IMR-90 (cell line): ENCODE measurements at regions of chr2 and their contacts with region 1.

Region 1: GRCh38 chr2:135773917-135774316 is 32.3 kb downstream of the UBXN4 start:
- DNase-seq: peak; percentile 80
- ATAC-seq: peak; percentile 66
- H3K4me3 ChIP-seq: no peak overlapping the region
- H3K27ac ChIP-seq: no peak overlapping the region
- H3K4me1 ChIP-seq: no peaks in the 10 kb centered on the region; the same call in 1 of the 2 replicates
- H3K27me3 ChIP-seq: no peaks in the 10 kb centered on the region
- CTCF ChIP-seq: no peak
- POLR2A ChIP-seq: no peak
- RAD21 ChIP-seq: no peak

Region 2: DNA sequence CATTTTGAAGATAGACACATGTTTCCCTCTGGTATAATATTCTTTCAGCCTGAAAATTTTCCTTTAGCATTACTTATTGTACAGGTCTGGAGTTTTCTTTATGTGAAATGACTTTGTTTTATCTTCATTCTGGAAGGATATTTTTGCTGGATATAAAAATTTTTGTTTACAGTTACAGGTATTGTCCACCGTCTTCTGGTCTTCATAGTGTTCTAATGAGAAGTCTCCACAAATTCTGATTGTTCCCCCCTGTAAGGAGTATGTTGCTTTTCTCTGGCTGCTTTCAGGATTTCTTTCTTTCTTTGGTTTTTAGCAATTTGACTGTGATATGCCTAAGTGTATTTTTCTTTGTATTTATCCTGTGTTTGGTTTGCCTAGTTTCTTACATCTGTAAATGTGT is 17.2 kb before region 1 on chr2:
- CTCF ChIA-PET with region 1: interaction called, 3 read pairs
- POLR2A ChIA-PET with region 1: interaction called, 3 read pairs
- dilution Hi-C with region 1: no loop called
- in situ Hi-C with region 1: no loop called
- intact Hi-C with region 1: loop called (anchors 1 kb)
- DNase-seq: no peak
- ATAC-seq: no peak
- H3K4me3 ChIP-seq: no peak overlapping the region
- H3K27ac ChIP-seq: no peak overlapping the region
- H3K4me1 ChIP-seq: no peaks in the 10 kb centered on the region
- H3K27me3 ChIP-seq: no peaks in the 10 kb centered on the region
- CTCF ChIP-seq: no peak
- POLR2A ChIP-seq: no peak
- RAD21 ChIP-seq: no peak

Region 3: GRCh38 chr2:135762022-135762421 is 11.9 kb before region 1 on chr2:
- CTCF ChIA-PET with region 1: interaction called, 3 read pairs
- POLR2A ChIA-PET with region 1: interaction called, 3 read pairs
- dilution Hi-C with region 1: no loop called
- in situ Hi-C with region 1: no loop called
- intact Hi-C with region 1: loop called (anchors 1 kb)
- DNase-seq: no peak
- ATAC-seq: no peak
- H3K4me3 ChIP-seq: no peak overlapping the region
- H3K27ac ChIP-seq: no peak overlapping the region
- H3K4me1 ChIP-seq: no peaks in the 10 kb centered on the region
- H3K27me3 ChIP-seq: no peaks in the 10 kb centered on the region
- CTCF ChIP-seq: no peak
- POLR2A ChIP-seq: no peak
- RAD21 ChIP-seq: no peak